ENCODE measurements at regions of chr17 and their contacts with region 1.

Region 1: DNA sequence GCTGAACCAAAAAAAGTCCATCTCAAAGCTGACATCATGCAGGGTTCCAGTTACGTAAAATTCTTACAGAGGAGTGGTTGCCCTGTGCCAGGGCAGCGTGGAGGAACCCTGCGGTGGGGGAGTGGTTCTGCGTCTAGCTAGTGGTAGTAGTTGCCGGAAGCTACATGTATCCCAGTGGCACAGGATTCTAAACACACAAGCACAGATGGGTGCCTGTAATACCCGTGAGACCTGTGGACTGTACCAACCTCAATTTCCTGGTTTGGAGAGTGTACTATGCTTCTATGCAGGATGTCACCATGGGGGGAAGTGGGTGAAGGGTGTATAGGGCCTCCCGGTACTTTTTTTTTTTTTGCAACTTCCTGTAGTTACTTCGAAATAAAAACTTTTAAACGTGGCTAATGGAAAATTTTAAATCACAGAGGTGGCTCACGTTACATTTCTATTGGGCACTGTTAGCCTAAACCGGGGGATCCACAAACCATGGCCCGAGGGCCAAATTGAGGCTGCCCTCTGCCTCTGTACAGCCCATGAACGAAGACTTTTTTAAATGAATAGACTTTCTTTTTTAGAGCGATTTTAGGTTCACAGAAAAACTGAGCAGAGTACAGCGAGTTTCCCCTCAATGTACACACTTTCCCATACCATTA is 38.5 kb downstream of the TBC1D16 start:
- DNase-seq: peak; percentile 88
- H3K4me3 Mint-ChIP-seq: peak overlapping the region; percentile 48
- H3K27ac Mint-ChIP-seq: peak overlapping the region; percentile 90
- H3K4me1 Mint-ChIP-seq: peaks cover 42% of the 10 kb centered on the region
- H3K27me3 Mint-ChIP-seq: no peaks in the 10 kb centered on the region

Region 2: DNA sequence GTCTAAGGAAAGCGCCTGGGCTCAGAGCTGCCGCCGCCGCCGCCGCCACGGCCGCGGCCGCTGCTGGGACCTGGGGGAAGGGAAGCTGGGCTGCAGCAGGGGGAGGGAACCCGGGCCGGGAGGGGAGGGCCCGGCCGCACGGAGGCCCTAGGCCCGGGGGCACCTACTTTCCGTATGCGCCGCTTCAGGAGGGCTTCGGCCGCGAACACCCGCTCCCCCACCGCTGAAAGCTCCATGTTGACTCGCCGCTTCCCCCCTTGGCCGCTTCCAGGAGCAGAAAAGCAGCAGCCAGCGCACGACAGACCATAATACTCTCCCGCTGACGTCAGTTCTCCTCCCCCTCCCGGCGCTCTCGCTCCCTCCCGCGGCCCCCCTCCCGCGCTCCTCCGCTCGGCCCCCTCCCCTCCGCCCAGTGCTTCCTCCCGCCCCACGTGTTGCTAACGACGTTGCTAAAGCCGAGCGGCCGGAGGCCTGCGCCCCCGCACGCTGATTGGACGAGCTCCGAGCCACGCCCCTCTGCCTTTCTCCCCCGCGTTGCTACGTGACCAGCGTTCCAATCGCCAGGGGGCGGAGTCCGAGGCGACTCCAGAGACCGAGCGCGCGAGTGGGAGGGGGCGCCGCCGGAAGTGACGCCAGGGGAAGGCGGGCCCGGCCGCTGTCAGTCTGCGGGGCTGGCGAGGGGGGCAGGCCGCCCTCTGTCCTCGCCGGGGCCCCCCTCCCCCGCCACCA is 200.2 kb before region 1 on chr17 and contains the start of gene CBX8:
- CTCF ChIA-PET with region 1: interaction called, 3 read pairs
- POLR2A ChIA-PET with region 1: no interaction called
- intact Hi-C with region 1: loop called (anchors 1 kb)
- DNase-seq: peak; percentile 100
- H3K4me3 Mint-ChIP-seq: peak within 1 kb of the TSS; percentile 76
- H3K27ac Mint-ChIP-seq: peak within 1 kb of the TSS; percentile 69
- H3K4me1 Mint-ChIP-seq: peaks cover 29% of the 10 kb centered on the region
- H3K27me3 Mint-ChIP-seq: peaks cover 35% of the 10 kb centered on the region
- total RNA-seq, gene CBX8: 4.5 to 4.6 TPM

Region 3: GRCh38 chr17:79803997-79804855 is 192.9 kb before region 1 on chr17:
- CTCF ChIA-PET with region 1: interaction called, 3 read pairs
- POLR2A ChIA-PET with region 1: no interaction called
- intact Hi-C with region 1: loop called (anchors 2 kb)
- DNase-seq: peak; percentile 90
- H3K4me3 Mint-ChIP-seq: peak overlapping the region; percentile 68
- H3K27ac Mint-ChIP-seq: peak overlapping the region; percentile 84
- H3K4me1 Mint-ChIP-seq: peaks cover 37% of the 10 kb centered on the region
- H3K27me3 Mint-ChIP-seq: peaks cover 78% of the 10 kb centered on the region

Region 4: GRCh38 chr17:80035943-80036714 is 39.0 kb after region 1 on chr17 and contains the start of gene CCDC40:
- CTCF ChIA-PET with region 1: no interaction called
- POLR2A ChIA-PET with region 1: no interaction called
- intact Hi-C with region 1: loop called (anchors 5 kb)
- DNase-seq: peak; percentile 80
- H3K4me3 Mint-ChIP-seq: peak within 1 kb of the TSS; percentile 80
- H3K27ac Mint-ChIP-seq: no peak within 1 kb of the TSS
- H3K4me1 Mint-ChIP-seq: peaks cover 8% of the 10 kb centered on the region
- H3K27me3 Mint-ChIP-seq: peaks cover 7% of the 10 kb centered on the region
- total RNA-seq, gene CCDC40: 0.82 to 1.00 TPM

Measured in activated CD4-positive, alpha-beta memory T cell treated with anti-CD3 and anti-CD28 coated beads for 36 hours (primary cell).